ENCODE measurements at regions of chr2 and their contacts with region 1.

Region 1: DNA sequence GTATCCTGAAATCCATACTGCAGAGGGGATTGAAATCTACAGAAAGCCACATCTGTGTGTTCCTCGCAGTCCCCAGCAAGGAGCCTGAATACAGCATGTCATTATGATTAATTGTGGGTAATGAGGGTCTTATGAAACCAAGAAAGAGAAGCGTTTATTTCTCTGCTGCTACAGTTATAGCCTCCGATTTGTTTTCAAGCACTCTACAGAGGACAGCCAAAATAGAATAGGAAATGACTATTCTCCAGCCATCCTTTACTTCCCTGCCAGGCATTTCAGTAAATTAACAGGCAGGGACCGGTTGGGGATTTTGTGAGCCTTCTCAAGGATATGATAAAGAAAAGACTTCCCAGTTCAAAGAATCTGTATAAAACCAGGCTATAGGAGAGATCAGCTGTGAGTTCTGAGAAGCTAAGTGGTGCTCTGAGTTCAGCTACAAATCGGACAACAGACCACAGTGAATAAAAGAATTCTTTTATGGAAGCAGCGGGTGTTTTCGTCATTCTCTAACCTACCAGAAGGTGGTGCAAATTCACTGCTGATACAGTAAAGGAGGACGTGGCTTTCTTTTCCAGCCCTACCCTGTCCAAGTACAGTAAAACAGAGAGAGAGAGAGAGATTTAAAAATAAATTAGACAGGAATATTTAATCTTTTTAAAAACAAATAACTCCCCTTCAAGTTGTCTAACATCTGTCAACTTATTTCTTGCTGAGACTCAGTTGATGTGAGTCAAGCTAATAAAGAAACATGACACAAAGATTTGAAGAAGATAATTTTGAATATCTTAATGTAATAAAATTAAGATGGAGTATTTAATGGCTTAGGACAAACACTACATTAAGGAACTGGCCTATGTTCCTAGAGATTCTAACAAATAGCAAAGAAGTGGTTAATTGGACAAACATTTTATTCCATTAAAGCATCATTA is 133.7 kb downstream of the INSIG2 start:
- DNase-seq: peak; percentile 54 to 63
- ATAC-seq: peak; percentile 85 to 95; a peak in 5 of 6 replicates
- H3K4me3 ChIP-seq: no peak overlapping the region
- H3K27ac ChIP-seq: no peak overlapping the region
- H3K4me1 ChIP-seq: no peaks in the 10 kb centered on the region
- CTCF ChIP-seq: peak; percentile 81
- EP300 ChIP-seq: no peak
- POLR2A ChIP-seq: no peak
- RAD21 ChIP-seq: peak; percentile 85 to 87

Region 2: DNA sequence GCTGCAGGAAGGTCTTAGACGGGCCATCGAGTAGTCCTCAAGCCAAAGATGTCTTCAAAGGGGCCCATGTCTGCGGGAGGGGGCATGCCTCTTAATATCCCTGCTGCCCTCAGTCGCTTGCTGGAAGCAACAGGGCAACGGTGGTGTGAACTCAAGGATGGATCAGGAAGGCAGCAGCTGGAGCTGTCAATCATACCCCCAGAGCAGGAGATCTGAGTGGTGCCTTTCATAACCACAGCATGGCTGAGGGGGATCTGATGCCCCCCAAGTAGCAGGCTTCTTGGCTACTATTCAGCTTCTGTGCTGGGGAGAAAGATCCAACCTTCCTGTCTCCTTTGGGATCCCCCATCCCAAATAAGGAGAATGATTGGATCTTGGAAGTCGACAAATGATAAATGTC is 87.3 kb before region 1 on chr2:
- CTCF ChIA-PET with region 1: no interaction called
- POLR2A ChIA-PET with region 1: no interaction called
- DNase-seq: no peak
- ATAC-seq: no peak
- H3K4me3 ChIP-seq: no peak overlapping the region
- H3K27ac ChIP-seq: no peak overlapping the region
- H3K4me1 ChIP-seq: no peaks in the 10 kb centered on the region
- CTCF ChIP-seq: no peak
- EP300 ChIP-seq: no peak
- POLR2A ChIP-seq: no peak
- RAD21 ChIP-seq: no peak

Region 3: DNA sequence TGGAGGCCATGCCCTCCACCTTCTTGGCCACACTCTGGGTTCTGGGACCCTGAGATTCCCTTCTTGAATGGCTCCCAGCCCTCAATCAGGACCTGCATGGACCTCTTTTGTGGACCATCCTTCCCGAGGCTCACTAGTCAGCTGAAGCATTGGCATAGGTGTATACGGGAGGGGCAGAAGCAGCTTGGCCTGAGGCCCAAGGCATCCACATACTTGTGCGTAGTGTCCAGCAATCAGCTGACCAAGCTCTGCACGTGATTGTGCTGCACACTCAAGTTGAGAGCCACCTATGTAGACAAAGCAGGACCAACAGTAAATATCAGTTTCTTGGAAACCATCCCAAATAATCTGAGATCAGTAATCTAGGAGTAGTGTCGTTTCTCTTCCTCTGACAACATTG is 14.0 kb before region 1 on chr2:
- CTCF ChIA-PET with region 1: interaction called, 27 read pairs
- POLR2A ChIA-PET with region 1: no interaction called
- DNase-seq: no peak
- ATAC-seq: no peak
- H3K4me3 ChIP-seq: no peak overlapping the region
- H3K27ac ChIP-seq: no peak overlapping the region
- H3K4me1 ChIP-seq: no peaks in the 10 kb centered on the region
- CTCF ChIP-seq: no peak
- EP300 ChIP-seq: no peak
- POLR2A ChIP-seq: no peak
- RAD21 ChIP-seq: no peak

Region 4: DNA sequence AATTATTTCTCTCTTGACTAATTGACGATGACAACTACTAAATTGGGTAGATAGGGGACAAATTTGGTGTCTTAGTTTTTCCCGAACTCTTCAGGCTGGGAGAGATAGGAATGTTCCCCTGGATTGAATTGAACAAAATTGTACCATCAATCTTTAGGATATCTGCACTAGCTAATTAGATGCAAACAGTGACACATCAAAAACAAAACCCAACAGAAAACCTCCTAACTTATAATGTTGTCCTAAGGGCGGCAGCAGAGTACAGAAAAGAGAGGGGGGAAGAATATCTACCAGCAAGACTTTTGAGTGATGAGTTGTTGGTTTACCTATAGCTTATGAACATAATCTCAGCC is 209.2 kb after region 1 on chr2:
- CTCF ChIA-PET with region 1: no interaction called
- POLR2A ChIA-PET with region 1: no interaction called
- DNase-seq: peak in 1 of 2 experiments; percentile 6
- ATAC-seq: no peak
- H3K4me3 ChIP-seq: no peak overlapping the region
- H3K27ac ChIP-seq: no peak overlapping the region
- H3K4me1 ChIP-seq: peaks cover 9% of the 10 kb centered on the region; the same call in 2 of the 3 replicates
- CTCF ChIP-seq: peak; percentile 13; the same call in 1 of the 3 replicates
- EP300 ChIP-seq: no peak
- POLR2A ChIP-seq: no peak
- RAD21 ChIP-seq: 0 out of 5 replicates have a peak, but pooled peaks of 1 of the 2 experiments have one; percentile 28

Region 5: DNA sequence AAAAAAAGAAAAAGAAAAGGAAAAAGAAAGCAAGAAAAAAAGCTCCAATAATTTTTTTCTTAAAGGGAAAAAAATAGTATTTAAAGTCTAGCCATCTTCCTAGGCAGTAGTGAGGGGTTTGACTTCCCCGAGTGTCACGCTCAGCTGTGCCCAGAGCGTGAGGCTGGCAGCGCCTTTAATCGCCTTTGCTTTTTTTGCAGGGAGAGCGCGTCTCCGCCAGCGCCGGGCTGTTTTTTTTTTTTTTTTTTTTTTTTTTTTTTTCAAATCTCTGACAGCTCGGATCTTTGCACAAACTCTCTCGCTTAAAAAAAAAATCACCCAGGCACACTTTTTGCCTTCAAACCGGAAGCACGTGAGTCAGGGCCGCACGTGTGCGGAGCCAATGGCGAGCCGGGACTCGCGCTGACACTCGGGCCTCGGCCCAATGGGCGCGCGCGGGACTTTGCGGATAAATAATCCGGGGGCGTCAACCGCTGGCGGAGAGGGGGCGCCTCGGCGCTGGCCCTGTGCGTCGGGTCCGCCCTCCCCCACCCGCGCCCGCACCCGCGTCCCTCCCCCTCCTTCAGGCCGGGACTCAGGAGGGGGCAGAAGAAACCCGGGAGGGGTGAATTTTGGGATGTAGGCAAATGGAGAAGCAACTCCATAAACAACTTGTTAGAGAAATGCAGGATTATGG is 625.7 kb after region 1 on chr2 and contains the start of gene EN1:
- CTCF ChIA-PET with region 1: interaction called, 14 read pairs
- POLR2A ChIA-PET with region 1: no interaction called
- DNase-seq: peak in 1 of 2 experiments; percentile 56
- ATAC-seq: peak in 1 of 2 experiments; percentile 66; a peak in 3 of 6 replicates
- H3K4me3 ChIP-seq: peak within 1 kb of the TSS; percentile 57
- H3K27ac ChIP-seq: peak within 1 kb of the TSS; percentile 65 to 91
- H3K4me1 ChIP-seq: 0 out of 3 replicates have a peak, but pooled peaks cover 3% of the 10 kb centered on the region
- CTCF ChIP-seq: no peak
- EP300 ChIP-seq: no peak
- POLR2A ChIP-seq: no peak
- RAD21 ChIP-seq: no peak
- polyA plus RNA-seq, gene EN1: 0.05 and 0.06 TPM in 2 replicates

Region 6: GRCh38 chr2:118865106-118865505 is 643.2 kb after region 1 on chr2:
- CTCF ChIA-PET with region 1: interaction called, 41 read pairs
- POLR2A ChIA-PET with region 1: no interaction called
- DNase-seq: peak; percentile 29 to 55
- ATAC-seq: peak; percentile 94 to 99
- H3K4me3 ChIP-seq: no peak overlapping the region
- H3K27ac ChIP-seq: no peak overlapping the region
- H3K4me1 ChIP-seq: peaks cover 5% of the 10 kb centered on the region; the same call in 1 of the 3 replicates
- CTCF ChIP-seq: peak; percentile 77
- EP300 ChIP-seq: no peak
- POLR2A ChIP-seq: no peak
- RAD21 ChIP-seq: peak; percentile 76 to 90

Measured in A549 (cell line).